Aorta (tissue), 5 donors: ENCODE measurements at regions of chr2 and their contacts with region 1.

Region 1: DNA sequence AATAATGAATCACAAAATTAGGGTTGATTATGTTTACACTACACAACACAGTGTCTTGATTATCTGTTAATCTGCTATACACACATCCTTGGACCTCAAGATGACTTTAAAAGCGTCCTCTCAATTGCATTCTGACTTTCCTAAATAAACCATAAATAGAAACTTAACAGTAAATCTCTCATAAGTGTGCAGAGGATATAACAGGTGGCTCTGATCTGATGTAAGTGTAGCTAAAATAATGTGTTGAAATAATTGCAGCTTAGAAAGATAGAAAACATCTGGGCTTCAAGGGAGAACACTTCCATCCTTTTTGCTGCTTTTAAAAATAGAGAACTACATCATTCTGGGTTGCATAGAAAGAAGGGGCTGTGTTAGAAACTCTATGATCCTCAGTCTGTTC is 78.4 kb upstream of the EFEMP1 start:
- DNase-seq: no peak
- ATAC-seq: no peak
- H3K4me3 ChIP-seq: no peak overlapping the region
- H3K27ac ChIP-seq: no peak overlapping the region
- H3K4me1 ChIP-seq: no peaks in the 10 kb centered on the region
- H3K27me3 ChIP-seq: no peaks in the 10 kb centered on the region

Region 2: DNA sequence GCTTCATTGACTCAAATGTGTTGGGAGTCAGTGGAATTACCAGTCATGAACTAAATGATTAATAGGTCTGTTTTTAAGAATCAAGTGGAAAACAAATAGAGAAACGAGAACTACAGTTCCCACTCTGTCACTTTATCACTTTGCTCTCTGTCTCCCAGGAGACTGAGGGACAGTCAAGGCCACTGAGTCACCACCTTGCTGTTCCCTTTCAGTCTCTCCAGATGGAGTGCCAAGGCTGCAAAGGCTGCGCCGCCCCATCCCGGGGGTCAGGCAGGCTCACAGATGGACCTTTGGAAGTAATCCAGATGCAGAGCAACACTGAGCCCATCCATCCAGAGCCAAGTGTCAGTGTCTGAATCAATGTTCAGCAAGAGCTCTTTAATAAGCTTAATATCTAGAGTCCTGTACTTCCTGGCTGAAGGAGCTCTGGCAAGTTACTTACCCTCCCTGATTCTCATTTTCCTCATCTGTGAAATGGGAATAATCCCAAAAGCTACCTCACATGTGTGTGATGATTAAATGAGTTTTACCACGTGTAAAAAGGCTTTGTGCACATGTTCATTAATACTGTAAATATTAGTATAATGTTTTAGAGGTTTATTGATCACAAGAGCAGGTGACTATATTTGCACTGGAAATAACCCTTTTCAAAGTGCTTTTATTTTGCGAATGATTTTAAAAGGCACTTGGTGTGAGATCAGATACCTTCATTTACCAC is 35.4 kb before region 1 on chr2:
- intact Hi-C with region 1: loop called (anchors 5 kb)
- DNase-seq: peak; percentile 69 to 77
- ATAC-seq: peak; percentile 68
- H3K4me3 ChIP-seq: no peak overlapping the region
- H3K27ac ChIP-seq: peak overlapping the region; percentile 43 to 70
- H3K4me1 ChIP-seq: peaks cover 2 to 5% of the 10 kb centered on the region in 2 donors
- H3K27me3 ChIP-seq: no peaks in the 10 kb centered on the region

Region 3: DNA sequence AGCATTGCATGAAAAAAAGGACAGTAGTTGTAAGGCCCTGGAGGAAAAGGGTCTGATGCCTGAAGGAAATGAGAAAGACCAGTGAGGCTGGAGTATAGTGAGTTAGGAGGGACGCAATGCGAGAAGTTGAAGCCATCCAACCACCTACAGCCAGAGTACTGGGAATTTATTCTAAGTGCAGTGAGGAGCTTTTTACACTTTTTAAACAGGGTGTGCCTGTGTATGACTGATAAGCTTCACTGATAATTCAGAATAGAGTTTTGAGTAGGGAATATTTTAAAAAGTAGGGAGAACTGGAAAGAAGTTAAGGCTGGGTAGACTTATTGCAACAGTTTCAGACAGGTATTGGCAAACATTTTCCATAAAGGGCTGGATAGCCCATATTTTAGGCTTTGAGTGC is 146.0 kb after region 1 on chr2:
- intact Hi-C with region 1: no loop called
- DNase-seq: no peak
- ATAC-seq: no peak
- H3K4me3 ChIP-seq: no peak overlapping the region
- H3K27ac ChIP-seq: no peak overlapping the region
- H3K4me1 ChIP-seq: no peaks in the 10 kb centered on the region
- H3K27me3 ChIP-seq: no peaks in the 10 kb centered on the region

Region 4: GRCh38 chr2:56444339-56444738 is 442.4 kb after region 1 on chr2:
- intact Hi-C with region 1: no loop called
- DNase-seq: peak in 1 of 2 donors; percentile 66
- ATAC-seq: no peak
- H3K4me3 ChIP-seq: no peak overlapping the region
- H3K27ac ChIP-seq: no peak overlapping the region
- H3K4me1 ChIP-seq: no peaks in the 10 kb centered on the region
- H3K27me3 ChIP-seq: peaks cover 0 to 2% of the 10 kb centered on the region in 2 donors